ENCODE measurements at regions of chr3 and their contacts with region 1.

Region 1: DNA sequence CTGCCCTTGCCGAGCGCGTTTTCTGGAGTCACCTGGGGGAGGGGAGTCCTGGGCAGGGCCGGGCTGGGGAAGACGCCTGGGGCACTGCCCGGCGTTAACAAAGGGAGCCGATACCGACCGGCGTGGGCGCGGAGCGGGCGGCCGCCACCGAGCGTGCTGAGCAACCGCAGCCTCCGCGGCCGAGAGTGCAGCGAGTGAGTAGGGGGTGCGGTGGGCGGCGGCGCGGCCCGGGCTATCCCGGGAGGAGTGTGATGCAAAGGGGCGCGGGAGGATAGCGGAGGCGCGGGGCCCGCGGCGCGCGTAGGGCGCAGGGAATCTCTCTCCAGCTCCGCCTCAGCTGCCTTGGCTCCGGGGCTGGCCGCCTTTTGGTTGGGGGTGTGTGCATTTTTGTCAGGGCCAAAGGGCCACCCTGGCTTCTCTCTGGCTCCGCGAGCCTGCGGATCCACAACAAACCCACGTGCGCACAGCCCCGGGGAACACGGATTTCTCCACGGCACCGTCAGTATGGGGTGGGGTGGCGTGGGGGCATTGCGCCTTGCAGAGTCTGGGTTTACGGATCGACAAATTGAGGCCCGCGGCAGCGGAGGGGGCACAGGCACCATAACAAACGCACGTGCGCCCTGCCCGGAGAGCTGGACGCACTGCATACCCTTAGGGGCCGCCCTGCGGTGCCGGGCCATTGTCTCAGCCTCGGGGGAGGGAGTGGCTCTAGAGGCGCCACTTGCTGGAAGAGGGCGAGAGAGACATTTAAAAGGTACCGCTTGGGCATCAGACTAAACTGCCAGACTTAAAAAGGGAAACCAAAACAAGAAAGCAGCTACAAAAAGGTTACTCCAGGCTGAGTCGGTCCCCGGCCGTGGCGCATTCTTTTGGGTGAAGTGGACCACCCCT is 560 bp downstream of the ST6GAL1 start:
- DNase-seq: peak; percentile 65
- ATAC-seq: peak; percentile 83
- H3K4me3 Mint-ChIP-seq: peak overlapping the region; percentile 98
- H3K27ac Mint-ChIP-seq: peak overlapping the region; percentile 94
- H3K4me1 Mint-ChIP-seq: peaks cover 53% of the 10 kb centered on the region
- H3K27me3 Mint-ChIP-seq: no peaks in the 10 kb centered on the region
- CTCF ChIP-seq: no peak

Region 2: GRCh38 chr3:186772701-186773424 is 158.0 kb before region 1 on chr3:
- CTCF ChIA-PET with region 1: no interaction called
- POLR2A ChIA-PET with region 1: interaction called, 12 read pairs
- intact Hi-C with region 1: no loop called
- DNase-seq: peak; percentile 67
- ATAC-seq: peak; percentile 94
- H3K4me3 Mint-ChIP-seq: peak overlapping the region; percentile 96
- H3K27ac Mint-ChIP-seq: peak overlapping the region; percentile 96
- H3K4me1 Mint-ChIP-seq: peaks cover 23% of the 10 kb centered on the region
- H3K27me3 Mint-ChIP-seq: no peaks in the 10 kb centered on the region
- CTCF ChIP-seq: no peak

Region 3: GRCh38 chr3:186909078-186909853 is 21.6 kb before region 1 on chr3:
- CTCF ChIA-PET with region 1: interaction called, 6 read pairs
- POLR2A ChIA-PET with region 1: interaction called, 17 read pairs
- intact Hi-C with region 1: loop called (anchors 1 kb)
- DNase-seq: peak; percentile 39
- ATAC-seq: peak; percentile 85
- H3K4me3 Mint-ChIP-seq: peak overlapping the region; percentile 61
- H3K27ac Mint-ChIP-seq: peak overlapping the region; percentile 87
- H3K4me1 Mint-ChIP-seq: peaks cover 27% of the 10 kb centered on the region
- H3K27me3 Mint-ChIP-seq: no peaks in the 10 kb centered on the region
- CTCF ChIP-seq: no peak

Region 4: DNA sequence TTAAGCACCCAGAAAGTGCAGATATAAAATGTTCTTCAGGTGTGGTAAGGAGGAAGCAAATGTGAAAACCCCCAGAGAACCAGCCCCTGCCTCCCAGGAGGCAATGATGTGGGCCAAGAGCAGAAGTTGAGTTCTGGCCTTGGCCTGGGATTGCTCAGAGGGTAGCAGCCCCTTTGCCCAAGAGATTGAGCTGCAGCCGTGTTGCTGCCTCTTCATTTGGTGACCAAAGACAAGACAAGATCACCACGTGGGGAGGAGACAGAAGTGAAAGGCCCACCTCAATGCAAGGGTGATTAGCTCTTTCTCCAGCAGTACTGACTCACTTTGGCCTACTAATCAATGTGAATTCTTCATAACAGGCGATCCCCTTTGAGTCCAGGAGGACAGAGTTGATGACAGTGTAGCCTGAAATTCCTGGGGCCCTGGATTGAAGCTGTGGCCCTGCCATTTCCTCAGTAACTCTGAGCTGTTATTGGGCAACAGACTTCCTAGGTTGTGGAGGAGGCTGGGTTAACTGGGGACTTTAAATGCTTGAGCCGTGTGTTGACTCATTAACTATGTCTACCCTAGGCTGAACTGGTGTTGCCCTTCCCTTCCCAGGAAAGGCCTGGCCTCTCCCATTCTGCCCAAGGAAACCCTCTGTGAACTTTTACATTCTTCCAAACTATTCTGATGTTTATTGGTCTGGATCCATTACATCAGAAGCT is 85.9 kb after region 1 on chr3:
- CTCF ChIA-PET with region 1: interaction called, 4 read pairs
- POLR2A ChIA-PET with region 1: interaction called, 28 read pairs
- intact Hi-C with region 1: loop called (anchors 1 kb)
- DNase-seq: peak; percentile 52
- ATAC-seq: peak; percentile 66
- H3K4me3 Mint-ChIP-seq: peak overlapping the region; percentile 73
- H3K27ac Mint-ChIP-seq: peak overlapping the region; percentile 87
- H3K4me1 Mint-ChIP-seq: peaks cover 100% of the 10 kb centered on the region
- H3K27me3 Mint-ChIP-seq: no peaks in the 10 kb centered on the region
- CTCF ChIP-seq: no peak

Region 5: DNA sequence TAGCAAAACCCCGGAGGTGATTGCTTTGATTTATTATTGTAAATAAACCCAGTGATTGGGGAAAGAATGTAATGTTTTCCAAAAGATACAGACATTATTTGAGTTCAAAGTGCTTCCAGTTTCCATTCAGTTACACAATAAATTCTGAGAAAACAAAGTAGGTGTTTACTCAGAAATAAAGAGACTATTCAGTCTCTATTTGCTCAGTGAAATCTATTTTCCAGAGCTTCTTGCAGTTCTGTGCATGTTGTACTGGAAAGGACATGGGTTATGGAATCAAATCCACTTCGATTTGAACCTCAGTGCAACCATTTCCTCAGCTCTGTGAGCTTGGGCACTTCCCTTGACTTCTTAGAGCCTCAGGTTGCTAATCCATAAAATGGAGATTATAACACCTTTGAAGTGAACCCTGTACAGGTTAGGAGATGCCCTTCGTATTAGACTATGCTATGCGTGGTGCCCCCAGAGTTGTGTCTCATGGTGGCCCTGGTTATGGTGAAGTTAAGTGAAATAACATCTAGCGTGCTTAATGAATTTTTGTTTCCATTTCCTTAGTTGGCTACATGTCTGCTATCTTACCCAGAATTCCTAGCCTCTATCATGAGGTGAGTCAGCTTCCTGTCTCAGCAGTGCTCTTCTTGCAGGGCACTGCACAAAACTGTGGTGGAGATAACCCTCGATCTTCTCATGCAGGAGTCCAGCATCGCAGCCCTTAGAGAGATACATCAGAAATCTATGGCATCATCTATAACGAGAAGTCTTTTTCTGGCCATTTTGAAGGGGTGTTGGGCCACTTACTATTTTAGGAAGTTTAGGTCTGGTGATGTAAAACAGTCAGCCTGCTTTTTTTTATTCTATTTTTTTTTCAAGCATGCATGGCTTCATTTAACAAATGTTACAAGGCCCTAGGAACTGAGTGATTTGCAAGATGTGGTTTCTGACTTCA is 110.7 kb after region 1 on chr3:
- CTCF ChIA-PET with region 1: no interaction called
- POLR2A ChIA-PET with region 1: interaction called, 14 read pairs
- intact Hi-C with region 1: loop called (anchors 1 kb)
- DNase-seq: no peak
- ATAC-seq: peak; percentile 81
- H3K4me3 Mint-ChIP-seq: peak overlapping the region; percentile 74
- H3K27ac Mint-ChIP-seq: peak overlapping the region; percentile 97
- H3K4me1 Mint-ChIP-seq: peaks cover 83% of the 10 kb centered on the region
- H3K27me3 Mint-ChIP-seq: no peaks in the 10 kb centered on the region
- CTCF ChIP-seq: no peak

Region 6: DNA sequence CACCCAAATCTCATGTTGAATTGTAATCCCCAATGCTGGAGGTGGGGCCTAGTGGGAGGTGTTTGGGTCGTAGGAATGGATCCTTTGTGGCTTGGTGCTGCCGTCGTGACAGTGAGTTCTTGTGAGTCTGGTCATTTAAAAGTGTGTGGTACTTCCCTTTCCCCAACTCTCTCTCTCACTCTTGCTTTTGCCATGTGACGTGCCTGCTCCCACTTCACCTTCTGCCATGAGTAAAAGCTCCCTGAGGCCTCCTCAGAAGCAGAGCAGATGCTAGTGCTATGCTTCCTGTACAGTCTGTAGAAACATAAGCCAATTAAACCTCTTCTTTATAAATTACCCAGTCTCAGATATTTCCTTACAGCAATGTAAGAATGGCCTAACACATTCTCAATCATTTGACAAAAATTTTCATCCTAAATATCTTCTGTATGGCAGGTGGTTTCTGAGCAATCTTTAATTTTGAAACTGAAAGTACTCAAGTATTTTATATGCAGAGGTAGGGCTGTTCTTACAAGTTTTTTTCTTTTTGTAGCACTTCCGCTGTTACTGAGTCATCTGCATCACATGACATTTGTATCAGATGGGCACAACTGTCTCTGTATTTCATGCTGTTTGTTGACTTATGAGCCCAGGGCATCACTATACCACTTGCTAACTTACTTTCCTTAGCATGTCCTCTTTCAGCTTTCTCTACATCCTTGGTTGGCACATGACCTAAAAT is 199.6 kb after region 1 on chr3:
- CTCF ChIA-PET with region 1: no interaction called
- POLR2A ChIA-PET with region 1: interaction called, 4 read pairs
- intact Hi-C with region 1: loop called (anchors 2 kb)
- DNase-seq: no peak
- ATAC-seq: peak; percentile 90
- H3K4me3 Mint-ChIP-seq: peak overlapping the region; percentile 76
- H3K27ac Mint-ChIP-seq: peak overlapping the region; percentile 96
- H3K4me1 Mint-ChIP-seq: peaks cover 46% of the 10 kb centered on the region
- H3K27me3 Mint-ChIP-seq: no peaks in the 10 kb centered on the region
- CTCF ChIP-seq: no peak

Region 7: GRCh38 chr3:187164885-187165543 is 234.1 kb after region 1 on chr3:
- CTCF ChIA-PET with region 1: interaction called, 3 read pairs
- POLR2A ChIA-PET with region 1: interaction called, 5 read pairs
- intact Hi-C with region 1: loop called (anchors 1 kb)
- DNase-seq: no peak
- ATAC-seq: peak; percentile 73
- H3K4me3 Mint-ChIP-seq: no peak overlapping the region
- H3K27ac Mint-ChIP-seq: no peak overlapping the region
- H3K4me1 Mint-ChIP-seq: no peaks in the 10 kb centered on the region
- H3K27me3 Mint-ChIP-seq: peaks cover 14% of the 10 kb centered on the region
- CTCF ChIP-seq: no peak

Region 8: DNA sequence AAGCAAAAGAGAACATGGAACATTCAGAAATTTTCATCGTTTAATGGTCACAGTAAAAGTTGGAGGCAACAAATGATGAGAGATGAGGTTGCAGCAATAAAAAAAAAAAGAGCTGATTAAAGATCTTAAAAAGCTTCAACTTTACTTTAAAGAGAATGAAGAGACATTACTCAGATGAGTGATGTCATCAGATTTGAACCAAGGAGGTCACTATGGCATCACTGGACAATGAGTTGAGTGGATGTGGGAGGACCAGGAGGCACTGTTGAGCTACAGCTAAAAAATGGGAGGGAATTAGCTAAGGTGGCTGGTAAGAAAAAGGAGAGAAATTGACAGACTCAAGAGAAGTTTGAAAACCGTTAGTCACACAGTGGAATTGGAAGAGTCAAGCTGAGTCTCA is 600.9 kb after region 1 on chr3:
- CTCF ChIA-PET with region 1: no interaction called
- POLR2A ChIA-PET with region 1: no interaction called
- intact Hi-C with region 1: no loop called
- DNase-seq: no peak
- ATAC-seq: no peak
- H3K4me3 Mint-ChIP-seq: no peak overlapping the region
- H3K27ac Mint-ChIP-seq: no peak overlapping the region
- H3K4me1 Mint-ChIP-seq: no peaks in the 10 kb centered on the region
- H3K27me3 Mint-ChIP-seq: peaks cover 20% of the 10 kb centered on the region
- CTCF ChIP-seq: no peak

Measured in activated B cell treated with CpG ODN at 0.5 μM for 24 hours (primary cell).